A549 (cell line): ENCODE measurements at regions of chr19 and their contacts with region 1.

Region 1: GRCh38 chr19:43765109-43765876 is 10.5 kb upstream of the SMG9 start:
- DNase-seq: peak; percentile 93 to 95
- ATAC-seq: peak; percentile 92 to 94
- H3K4me3 ChIP-seq: 0 out of 3 replicates have a peak overlapping the region, but pooled peaks have one; percentile 2
- H3K27ac ChIP-seq: peak overlapping the region; percentile 90 to 92
- H3K4me1 ChIP-seq: peaks cover 38% of the 10 kb centered on the region
- CTCF ChIP-seq: no peak
- EP300 ChIP-seq: peak in 1 of 2 experiments; percentile 44; a peak in 1 of 5 replicates
- POLR2A ChIP-seq: no peak
- RAD21 ChIP-seq: peak; percentile 7 to 24; a peak in 2 of 5 replicates

Region 2: DNA sequence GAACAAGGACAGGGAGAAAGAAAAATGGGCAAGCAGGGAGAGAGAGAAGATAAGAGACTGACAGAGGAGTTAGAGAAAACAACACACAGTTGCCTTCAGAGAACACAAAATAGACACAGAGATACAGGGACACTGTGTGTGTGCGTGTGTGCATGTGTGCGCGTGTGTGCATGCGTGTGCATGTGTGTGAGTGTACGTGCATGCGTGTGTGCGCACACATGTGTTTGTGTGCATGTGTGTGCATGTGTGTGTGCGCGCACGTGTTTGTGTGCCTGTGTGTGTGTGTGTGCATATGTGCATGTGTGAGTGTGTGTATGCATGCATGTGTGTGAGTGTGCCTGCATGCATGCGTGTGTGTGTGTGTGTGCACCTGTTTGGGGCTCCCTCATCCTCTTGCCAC is 89.4 kb before region 1 on chr19:
- CTCF ChIA-PET with region 1: interaction called, 11 read pairs
- POLR2A ChIA-PET with region 1: interaction called, 3 read pairs
- DNase-seq: no peak
- ATAC-seq: no peak; a peak in 1 of 6 replicates
- H3K4me3 ChIP-seq: no peak overlapping the region
- H3K27ac ChIP-seq: peak overlapping the region; percentile 58 to 72
- H3K4me1 ChIP-seq: peaks cover 34% of the 10 kb centered on the region
- CTCF ChIP-seq: no peak
- EP300 ChIP-seq: no peak
- POLR2A ChIP-seq: no peak
- RAD21 ChIP-seq: no peak

Region 3: DNA sequence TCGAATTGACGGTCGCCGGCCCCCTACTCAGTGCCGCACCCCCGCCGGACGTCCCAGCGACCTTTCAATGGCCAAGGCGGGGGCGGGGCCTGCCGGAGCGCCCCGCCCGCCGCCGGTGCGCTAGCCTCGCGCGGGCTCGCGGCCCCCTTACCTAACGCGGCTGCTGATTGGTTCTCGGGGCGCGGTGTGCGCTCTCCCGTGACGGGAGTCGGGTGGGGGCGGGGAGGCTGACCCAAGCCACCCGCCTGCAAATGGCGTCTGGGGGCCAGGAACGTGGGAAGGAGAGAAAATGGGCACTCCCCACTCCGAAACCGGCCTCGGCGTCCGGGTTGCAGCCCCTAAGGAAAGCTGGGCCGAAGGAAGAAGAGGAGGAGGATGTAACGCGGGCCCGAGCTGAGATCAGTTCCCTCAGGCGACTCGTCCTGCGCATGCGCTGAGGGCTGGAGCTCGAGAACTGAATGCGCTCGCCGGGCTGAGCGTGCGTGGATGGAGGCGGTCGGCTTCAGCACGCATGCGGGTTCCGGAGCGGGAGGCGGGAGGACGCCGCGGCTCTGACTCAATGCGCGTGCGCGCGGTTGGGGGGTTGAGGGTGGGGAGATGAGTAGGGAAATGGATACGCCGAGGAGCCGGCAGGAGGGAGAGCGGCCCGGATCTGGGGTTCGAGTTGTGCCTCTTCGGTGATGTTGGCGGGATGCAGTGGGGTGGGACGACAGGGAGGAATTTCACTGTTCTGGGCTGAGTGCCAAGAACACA is 10.6 kb before region 1 on chr19 and contains the start of gene SMG9:
- CTCF ChIA-PET with region 1: interaction called, 96 read pairs
- POLR2A ChIA-PET with region 1: interaction called, 46 read pairs
- DNase-seq: peak; percentile 99
- ATAC-seq: peak; percentile 85 to 89
- H3K4me3 ChIP-seq: peak within 1 kb of the TSS; percentile 75
- H3K27ac ChIP-seq: peak within 1 kb of the TSS; percentile 94 to 99
- H3K4me1 ChIP-seq: peaks cover 61% of the 10 kb centered on the region
- CTCF ChIP-seq: no peak
- EP300 ChIP-seq: 0 out of 5 replicates have a peak, but pooled peaks of 1 of the 2 experiments have one; percentile 12
- POLR2A ChIP-seq: peak; percentile 61
- RAD21 ChIP-seq: no peak; a peak in 1 of 5 replicates
- polyA plus RNA-seq, gene SMG9: 14.2 and 24.4 TPM in 2 replicates